ENCODE measurements at regions of chr5 and their contacts with region 1.

Region 1: DNA sequence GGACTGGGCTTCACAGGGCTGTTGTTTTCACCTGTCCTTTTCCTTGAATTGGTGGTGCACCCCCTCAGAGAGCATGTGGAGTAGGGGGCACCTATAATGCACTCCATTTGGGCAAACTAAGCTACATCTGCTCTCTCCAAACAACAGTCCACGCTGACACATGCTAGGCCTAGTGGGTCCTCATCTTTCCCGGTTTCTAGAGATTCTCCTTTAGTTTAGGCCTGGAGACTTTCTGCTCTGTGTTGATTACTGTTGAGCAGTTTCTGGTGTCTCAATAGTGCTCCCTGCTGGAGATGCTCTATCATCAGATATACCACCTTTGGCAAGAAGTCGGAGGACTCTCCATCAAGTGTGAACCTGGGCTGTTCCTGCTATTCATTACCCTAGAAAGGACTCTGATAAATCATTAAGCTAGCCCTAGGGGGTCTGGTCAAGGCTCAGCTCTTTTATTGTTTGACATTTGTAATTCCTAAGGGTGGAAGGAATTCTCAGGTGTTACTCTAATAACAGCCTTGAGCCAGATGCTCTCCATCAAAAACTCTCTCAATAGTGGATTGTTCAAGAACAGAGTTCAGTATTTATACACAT is 64.0 kb upstream of the FYB1 start:
- DNase-seq: peak in 25 of 42 donors; percentile 5 to 77 (median 35)

Region 2: DNA sequence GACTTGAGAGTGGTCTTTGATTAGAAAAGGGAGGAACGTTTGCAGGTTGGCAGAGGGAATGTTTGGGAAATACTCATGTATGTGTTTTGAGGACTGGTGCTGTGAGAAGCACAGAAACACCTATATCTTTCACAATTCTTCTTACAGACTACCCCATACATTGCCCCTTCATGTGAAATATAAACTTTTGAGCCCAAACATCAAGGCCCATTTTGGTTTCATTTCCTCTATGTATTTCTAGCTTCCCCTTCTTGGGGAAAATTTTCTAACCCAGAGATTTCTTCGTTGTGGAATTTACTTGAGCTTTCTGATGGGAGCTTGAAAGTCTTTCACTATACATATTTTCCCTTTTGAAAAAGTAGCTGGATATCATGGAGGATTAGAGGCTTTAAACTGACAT is 131.6 kb before region 1 on chr5:
- intact Hi-C with region 1: loop called (anchors 5 kb)
- DNase-seq: no peak

Region 3: DNA sequence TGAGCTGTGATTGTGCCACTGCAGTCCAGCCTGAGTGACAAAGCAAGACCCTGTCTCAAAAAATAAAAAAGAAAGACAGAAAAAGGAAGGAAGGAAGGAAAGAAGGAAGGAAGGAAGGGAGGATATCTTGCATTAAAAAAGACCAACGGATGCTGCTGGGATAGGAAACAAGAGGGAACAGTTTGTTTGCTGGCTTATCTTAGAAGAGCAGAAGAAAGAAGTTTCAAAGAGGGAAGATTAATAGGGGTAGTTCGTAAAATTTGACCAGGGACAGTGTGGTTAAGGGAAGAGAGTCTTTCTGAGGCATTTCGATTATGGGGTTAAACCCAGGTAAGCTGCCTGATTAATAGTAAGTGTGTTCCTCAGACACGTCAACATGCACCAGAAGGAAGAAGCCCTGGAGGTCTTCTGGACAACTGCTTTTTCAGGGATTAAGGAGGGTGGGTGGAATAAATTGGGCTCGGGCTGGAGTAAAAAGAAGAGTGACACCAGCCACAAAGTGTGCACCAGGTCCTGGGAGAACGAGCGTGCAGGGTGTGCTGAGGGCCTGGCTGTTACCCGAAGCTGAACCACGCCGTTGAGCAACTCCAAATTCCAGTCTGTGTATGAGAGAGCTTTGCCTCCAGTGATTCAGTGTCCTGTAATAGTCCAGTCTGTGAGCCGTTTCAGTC is 88.7 kb before region 1 on chr5:
- intact Hi-C with region 1: no loop called
- DNase-seq: no peak

Region 4: GRCh38 chr5:39314591-39314990 is 31.3 kb after region 1 on chr5:
- intact Hi-C with region 1: no loop called
- DNase-seq: no peak